ENCODE measurements at regions of chr19 and their contacts with region 1.

Region 1: DNA sequence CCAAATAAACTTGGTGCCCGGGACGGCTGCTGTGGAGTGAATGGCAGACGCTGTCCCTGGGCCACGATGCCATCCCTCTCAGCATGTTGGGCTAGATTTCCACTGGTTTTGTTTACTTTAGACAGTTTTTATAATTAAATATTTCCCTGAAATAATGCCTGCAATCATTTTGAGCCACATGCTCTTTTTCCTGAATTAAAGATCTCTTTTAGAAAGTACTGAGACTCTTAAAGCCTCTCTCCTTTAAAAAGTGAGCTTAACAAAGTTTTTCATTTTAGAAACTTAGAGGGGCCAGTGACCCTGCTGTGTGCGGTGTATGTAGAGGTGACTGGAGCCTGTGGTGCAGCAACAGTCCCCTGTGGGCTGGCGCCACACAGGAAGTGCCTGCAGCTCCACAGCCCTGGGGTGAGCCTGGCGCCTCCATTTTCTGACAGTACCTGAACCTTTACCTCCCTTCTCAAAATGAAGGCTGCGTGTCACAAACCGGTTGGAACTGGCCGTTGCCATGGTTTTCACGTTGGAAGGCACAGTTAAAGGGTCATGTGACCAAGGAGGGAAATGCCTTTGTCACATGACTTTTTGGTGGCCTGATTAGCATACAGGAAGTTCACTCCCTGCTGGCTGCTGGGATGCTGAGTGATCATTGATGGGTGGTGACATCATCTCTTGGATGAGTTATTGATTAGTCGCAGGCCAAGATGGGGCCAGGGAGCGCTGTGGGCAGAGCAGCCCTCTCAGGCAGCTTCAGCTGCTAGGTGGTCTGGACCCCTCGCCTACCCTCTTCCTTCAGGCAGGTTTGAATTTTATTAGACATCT is 26.3 kb downstream of the TSSK6 start:
- DNase-seq: peak; percentile 76 to 98 (median 91)
- ATAC-seq: peak; percentile 85
- H3K4me3 ChIP-seq: peak overlapping the region in 1 of 2 experiments; percentile 0
- H3K4me3 Mint-ChIP-seq: peak overlapping the region; percentile 64
- H3K27ac ChIP-seq: peak overlapping the region; percentile 76 to 97
- H3K27ac Mint-ChIP-seq: peak overlapping the region; percentile 96
- H3K4me1 ChIP-seq: peaks cover 57% of the 10 kb centered on the region
- H3K4me1 Mint-ChIP-seq: peaks cover 55% of the 10 kb centered on the region
- H3K27me3 ChIP-seq: no peaks in the 10 kb centered on the region
- H3K27me3 Mint-ChIP-seq: no peaks in the 10 kb centered on the region
- CTCF ChIP-seq: no peak

Region 2: GRCh38 chr19:19185853-19186740 is 303.0 kb before region 1 on chr19:
- CTCF ChIA-PET with region 1: no interaction called
- POLR2A ChIA-PET with region 1: no interaction called
- intact Hi-C with region 1: loop called in 1 of 2 experiments (anchors 2 kb)
- DNase-seq: peak; percentile 16 to 78 (median 65)
- ATAC-seq: peak; percentile 96
- H3K4me3 ChIP-seq: no peak overlapping the region
- H3K4me3 Mint-ChIP-seq: no peak overlapping the region
- H3K27ac ChIP-seq: no peak overlapping the region
- H3K27ac Mint-ChIP-seq: peak overlapping the region; percentile 21
- H3K4me1 ChIP-seq: peaks cover 24% of the 10 kb centered on the region
- H3K4me1 Mint-ChIP-seq: peaks cover 32% of the 10 kb centered on the region
- H3K27me3 ChIP-seq: no peaks in the 10 kb centered on the region
- H3K27me3 Mint-ChIP-seq: no peaks in the 10 kb centered on the region
- CTCF ChIP-seq: peak; percentile 57

Region 3: DNA sequence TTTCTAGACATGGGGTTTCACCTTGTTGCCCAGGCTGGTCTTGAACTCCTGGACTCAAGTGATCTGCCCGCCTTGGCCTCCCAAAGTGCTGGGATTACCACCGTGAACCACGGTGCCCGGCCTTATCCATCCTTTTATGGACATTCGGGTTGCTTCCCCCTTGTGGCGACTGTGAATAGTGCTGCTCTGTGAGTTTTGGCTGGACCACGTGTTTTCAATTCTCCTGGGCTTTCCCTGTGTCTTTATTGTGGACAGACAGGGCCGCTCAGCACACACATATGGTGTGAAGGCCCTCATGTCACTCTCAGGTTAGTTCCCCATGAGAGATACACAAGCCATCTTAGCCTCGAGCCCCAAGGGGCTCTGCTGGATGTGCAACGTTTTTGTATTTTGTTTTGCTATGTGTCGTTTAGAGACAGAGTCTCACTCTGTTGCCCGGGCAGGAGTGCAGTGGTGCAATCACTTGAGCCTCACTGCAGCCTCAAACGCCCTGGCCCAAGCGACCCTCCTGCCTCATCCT is 127.9 kb before region 1 on chr19:
- CTCF ChIA-PET with region 1: interaction called, 202 read pairs
- POLR2A ChIA-PET with region 1: interaction called, 33 read pairs
- intact Hi-C with region 1: no loop called
- DNase-seq: peak; percentile 28 to 88 (median 69)
- ATAC-seq: peak; percentile 64
- H3K4me3 ChIP-seq: no peak overlapping the region
- H3K4me3 Mint-ChIP-seq: peak overlapping the region; percentile 36
- H3K27ac ChIP-seq: no peak overlapping the region
- H3K27ac Mint-ChIP-seq: peak overlapping the region; percentile 23
- H3K4me1 ChIP-seq: peaks cover 27% of the 10 kb centered on the region
- H3K4me1 Mint-ChIP-seq: peaks cover 37% of the 10 kb centered on the region
- H3K27me3 ChIP-seq: no peaks in the 10 kb centered on the region
- H3K27me3 Mint-ChIP-seq: no peaks in the 10 kb centered on the region
- CTCF ChIP-seq: peak; percentile 72

Region 4: DNA sequence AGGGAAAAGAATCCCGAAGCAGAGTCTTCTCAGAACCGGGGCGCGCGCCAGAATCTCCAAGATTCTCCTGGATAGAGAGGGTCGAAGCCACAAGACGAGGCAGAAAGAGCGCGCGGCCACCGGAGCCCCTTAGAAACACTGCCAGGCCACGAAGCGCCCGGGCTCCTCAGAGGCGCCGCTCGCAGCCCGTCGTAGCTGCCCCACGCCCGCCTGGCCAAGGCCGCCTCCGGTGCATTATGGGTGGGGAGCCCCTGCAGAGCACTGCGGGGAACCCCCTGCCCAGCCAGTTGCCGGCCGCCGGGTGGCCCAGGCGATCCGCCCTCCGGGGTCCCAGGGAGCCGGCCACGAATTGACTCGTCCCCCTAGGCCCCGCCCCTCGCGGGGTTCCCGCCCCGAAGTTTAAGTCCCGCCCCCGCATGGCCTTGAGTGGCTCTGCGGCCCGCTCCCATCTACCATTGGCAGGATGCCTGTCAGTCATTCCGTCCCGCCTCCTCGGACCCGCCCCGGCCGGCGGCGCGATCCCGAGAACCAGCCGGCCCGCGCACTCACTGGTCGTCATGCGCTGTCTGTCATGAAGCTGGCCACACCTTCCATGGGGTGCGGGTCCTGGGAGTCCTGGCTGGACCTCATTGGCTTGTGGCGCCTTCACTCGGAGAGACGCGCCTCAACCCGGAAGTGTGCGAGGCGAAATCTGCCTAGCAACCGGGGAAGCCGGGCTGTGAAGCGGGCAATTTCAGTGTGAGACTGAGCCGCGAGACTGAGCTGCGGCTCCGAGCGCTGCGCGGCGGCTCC is 103.8 kb before region 1 on chr19:
- CTCF ChIA-PET with region 1: interaction called, 4 read pairs
- POLR2A ChIA-PET with region 1: interaction called, 5 read pairs
- intact Hi-C with region 1: loop called (anchors 1 kb)
- DNase-seq: peak; percentile 99 to 100 (median 99)
- ATAC-seq: peak; percentile 86
- H3K4me3 ChIP-seq: peak overlapping the region; percentile 73 to 84
- H3K4me3 Mint-ChIP-seq: peak overlapping the region; percentile 93
- H3K27ac ChIP-seq: peak overlapping the region; percentile 71 to 88
- H3K27ac Mint-ChIP-seq: peak overlapping the region; percentile 92
- H3K4me1 ChIP-seq: peaks cover 45% of the 10 kb centered on the region
- H3K4me1 Mint-ChIP-seq: peaks cover 39% of the 10 kb centered on the region
- H3K27me3 ChIP-seq: no peaks in the 10 kb centered on the region
- H3K27me3 Mint-ChIP-seq: no peaks in the 10 kb centered on the region
- CTCF ChIP-seq: no peak

Region 5: DNA sequence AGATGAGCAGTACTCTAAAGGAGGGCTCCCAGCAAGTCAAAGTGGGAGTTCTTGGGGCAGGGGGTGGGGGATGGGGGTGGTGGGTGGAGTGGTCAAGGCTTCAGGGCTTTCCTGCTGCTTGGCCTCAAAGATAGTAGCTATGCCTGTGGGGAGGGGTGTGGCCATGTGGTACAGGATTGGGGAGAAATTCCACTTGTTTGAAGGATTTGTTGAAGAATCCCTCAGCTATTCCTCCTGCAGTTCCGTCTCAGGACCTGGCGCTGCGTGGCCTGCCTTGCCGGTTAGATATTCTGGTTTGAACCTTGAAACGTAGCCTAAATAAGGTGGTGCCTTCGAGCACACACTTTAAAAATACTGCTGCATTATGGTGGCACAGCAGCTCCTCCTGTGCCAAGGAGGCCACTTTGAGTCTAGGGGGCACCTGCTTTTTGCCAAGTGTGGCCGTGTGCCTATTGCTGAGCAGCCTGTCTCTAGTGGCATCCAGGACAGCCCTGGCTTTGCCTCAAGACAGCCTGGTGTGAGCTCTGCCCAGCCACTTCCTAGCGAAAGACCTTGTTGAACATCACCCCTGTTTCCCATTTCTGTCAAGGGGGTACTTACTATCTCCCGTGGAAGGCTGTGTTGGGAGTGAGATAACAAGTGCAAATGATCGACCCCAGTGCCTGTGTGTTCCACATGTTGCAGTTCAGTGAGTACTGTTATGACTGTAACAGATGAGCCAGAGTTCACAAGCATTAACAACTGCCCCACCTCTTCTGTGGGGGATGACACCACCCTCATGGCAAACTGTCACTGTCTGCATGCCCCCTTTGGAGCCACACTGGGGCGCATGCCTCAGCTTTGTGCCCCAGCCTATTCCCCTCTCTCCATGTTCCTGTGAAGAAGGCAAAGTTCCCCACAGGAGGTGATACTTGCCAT is 78.5 kb before region 1 on chr19:
- CTCF ChIA-PET with region 1: interaction called, 20 read pairs
- POLR2A ChIA-PET with region 1: interaction called, 23 read pairs
- intact Hi-C with region 1: loop called (anchors 1 kb)
- DNase-seq: peak in 5 of 9 experiments; percentile 22 to 70 (median 44)
- ATAC-seq: peak; percentile 54
- H3K4me3 ChIP-seq: no peak overlapping the region
- H3K4me3 Mint-ChIP-seq: peak overlapping the region; percentile 24
- H3K27ac ChIP-seq: peak overlapping the region in 1 of 2 experiments; percentile 65
- H3K27ac Mint-ChIP-seq: peak overlapping the region; percentile 82
- H3K4me1 ChIP-seq: peaks cover 70% of the 10 kb centered on the region
- H3K4me1 Mint-ChIP-seq: peaks cover 74% of the 10 kb centered on the region
- H3K27me3 ChIP-seq: no peaks in the 10 kb centered on the region
- H3K27me3 Mint-ChIP-seq: no peaks in the 10 kb centered on the region
- CTCF ChIP-seq: no peak

Region 6: DNA sequence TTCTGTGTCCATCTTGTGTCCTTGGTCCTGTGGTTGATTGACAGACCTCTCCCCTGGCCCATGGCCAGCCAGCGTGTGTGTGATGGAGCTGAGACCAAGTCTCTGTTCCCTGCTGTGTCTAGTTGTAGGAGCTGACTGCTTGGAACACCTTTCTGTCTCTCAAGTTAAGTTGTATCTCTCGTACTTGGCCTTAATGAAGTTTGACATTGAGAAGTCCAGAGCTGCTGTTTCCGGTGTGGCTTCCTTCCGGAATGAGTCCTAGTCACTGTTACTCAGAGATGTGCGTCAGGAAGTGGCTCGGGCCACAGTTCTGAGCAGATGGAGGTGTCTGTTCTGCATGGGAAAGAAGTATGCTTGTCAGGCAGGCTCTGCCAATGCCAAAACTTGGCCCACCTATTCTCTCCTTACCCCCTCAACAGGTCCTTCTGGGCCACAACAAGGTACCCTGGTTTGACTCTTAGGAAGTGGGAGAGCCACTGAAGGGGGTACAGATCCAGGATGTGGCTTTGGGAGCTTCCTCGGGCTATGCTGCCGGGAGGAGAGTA is 29.3 kb before region 1 on chr19:
- CTCF ChIA-PET with region 1: interaction called, 21 read pairs
- POLR2A ChIA-PET with region 1: interaction called, 10 read pairs
- intact Hi-C with region 1: loop called (anchors 1 to 2 kb)
- DNase-seq: peak in 8 of 9 experiments; percentile 54 to 90 (median 74)
- ATAC-seq: peak; percentile 63
- H3K4me3 ChIP-seq: peak overlapping the region; percentile 44 to 47
- H3K4me3 Mint-ChIP-seq: peak overlapping the region; percentile 85
- H3K27ac ChIP-seq: peak overlapping the region; percentile 67 to 96
- H3K27ac Mint-ChIP-seq: peak overlapping the region; percentile 98
- H3K4me1 ChIP-seq: peaks cover 83% of the 10 kb centered on the region
- H3K4me1 Mint-ChIP-seq: peaks cover 86% of the 10 kb centered on the region
- H3K27me3 ChIP-seq: no peaks in the 10 kb centered on the region
- H3K27me3 Mint-ChIP-seq: no peaks in the 10 kb centered on the region
- CTCF ChIP-seq: no peak

Measured in CD8-positive, alpha-beta T cell (primary cell).